ENCODE measurements at regions of chr11 and their contacts with region 1.

Region 1: GRCh38 chr11:107050121-107050520 is 31.8 kb upstream of the GUCY1A2 start:
- DNase-seq: no peak
- H3K4me3 ChIP-seq: no peak overlapping the region
- H3K27ac ChIP-seq: no peak overlapping the region
- H3K4me1 ChIP-seq: no peaks in the 10 kb centered on the region
- H3K27me3 ChIP-seq: no peaks in the 10 kb centered on the region
- CTCF ChIP-seq: no peak
- POLR2A ChIP-seq: no peak

Region 2: DNA sequence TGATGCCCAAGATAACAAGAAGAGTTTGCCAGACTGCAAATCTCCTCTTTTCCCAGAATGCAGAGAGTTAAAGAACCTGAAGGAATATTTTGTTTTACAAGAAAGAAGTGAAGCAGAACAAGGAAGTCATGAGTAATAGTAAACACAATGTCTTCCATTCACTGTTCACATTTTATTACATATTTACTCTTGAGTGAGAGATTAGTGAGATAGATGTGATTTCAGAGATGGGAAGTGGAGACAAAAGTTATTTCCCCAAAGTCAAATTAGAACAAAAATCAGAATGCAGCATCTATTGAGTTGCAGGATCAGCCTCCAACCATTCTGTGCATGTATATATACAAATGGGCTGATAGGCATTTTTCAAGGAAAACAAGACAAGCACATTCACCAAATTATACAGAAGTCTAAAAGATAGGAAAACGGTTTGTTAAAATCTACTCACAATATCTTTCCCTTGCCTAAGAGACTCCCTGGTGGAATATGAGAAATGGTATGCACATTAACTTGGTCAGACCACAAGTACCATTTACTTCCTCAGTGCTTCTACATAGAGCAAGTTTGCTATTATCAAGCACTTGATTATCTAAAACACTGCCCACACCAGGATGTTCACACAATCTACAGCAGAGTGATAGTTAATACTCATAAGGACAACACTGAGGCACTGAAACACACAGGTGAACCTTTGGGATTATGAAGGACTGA is 43.8 kb before region 1 on chr11:
- CTCF ChIA-PET with region 1: no interaction called
- POLR2A ChIA-PET with region 1: no interaction called
- dilution Hi-C with region 1: no loop called
- intact Hi-C with region 1: no loop called
- DNase-seq: no peak
- H3K4me3 ChIP-seq: no peak overlapping the region
- H3K27ac ChIP-seq: no peak overlapping the region
- H3K4me1 ChIP-seq: no peaks in the 10 kb centered on the region
- H3K27me3 ChIP-seq: no peaks in the 10 kb centered on the region
- CTCF ChIP-seq: no peak
- POLR2A ChIP-seq: no peak

Region 3: GRCh38 chr11:107071129-107071528 is 21.0 kb after region 1 on chr11:
- CTCF ChIA-PET with region 1: no interaction called
- POLR2A ChIA-PET with region 1: no interaction called
- dilution Hi-C with region 1: no loop called
- intact Hi-C with region 1: no loop called
- DNase-seq: no peak
- H3K4me3 ChIP-seq: no peak overlapping the region
- H3K27ac ChIP-seq: no peak overlapping the region
- H3K4me1 ChIP-seq: no peaks in the 10 kb centered on the region
- H3K27me3 ChIP-seq: no peaks in the 10 kb centered on the region
- CTCF ChIP-seq: no peak
- POLR2A ChIP-seq: no peak

Region 4: DNA sequence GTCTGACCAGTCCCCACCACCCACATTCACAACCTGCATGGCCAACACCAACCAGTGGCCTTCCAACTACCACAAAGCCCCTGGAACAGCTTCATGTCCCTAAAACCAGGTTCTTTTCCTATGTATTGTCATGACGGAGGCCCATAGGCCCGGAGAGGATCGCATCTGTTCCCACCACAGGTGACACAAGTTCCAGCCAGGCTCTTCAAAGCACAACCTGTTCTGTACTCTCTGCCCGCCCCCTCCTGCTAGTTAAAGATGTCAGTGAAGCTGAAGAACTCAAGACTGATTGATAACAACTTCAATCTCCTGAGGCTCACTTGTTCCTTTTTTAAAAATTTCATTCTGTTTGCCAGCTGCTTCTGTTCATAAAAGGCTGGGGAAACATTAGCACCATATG is 89.3 kb after region 1 on chr11:
- CTCF ChIA-PET with region 1: no interaction called
- POLR2A ChIA-PET with region 1: no interaction called
- dilution Hi-C with region 1: no loop called
- intact Hi-C with region 1: no loop called
- DNase-seq: no peak
- H3K4me3 ChIP-seq: no peak overlapping the region
- H3K27ac ChIP-seq: no peak overlapping the region
- H3K4me1 ChIP-seq: no peaks in the 10 kb centered on the region
- H3K27me3 ChIP-seq: no peaks in the 10 kb centered on the region
- CTCF ChIP-seq: no peak
- POLR2A ChIP-seq: no peak

Region 5: GRCh38 chr11:108947654-108948570 is 1897.8 kb after region 1 on chr11:
- CTCF ChIA-PET with region 1: no interaction called
- POLR2A ChIA-PET with region 1: no interaction called
- dilution Hi-C with region 1: no loop called
- intact Hi-C with region 1: loop called (anchors 10 kb)
- DNase-seq: peak; percentile 18
- H3K4me3 ChIP-seq: no peak overlapping the region
- H3K27ac ChIP-seq: no peak overlapping the region
- H3K4me1 ChIP-seq: peaks cover 3% of the 10 kb centered on the region
- H3K27me3 ChIP-seq: no peaks in the 10 kb centered on the region
- CTCF ChIP-seq: no peak
- POLR2A ChIP-seq: no peak

Measured in endothelial cell of umbilical vein (primary cell).